ENCODE measurements at regions of chr21 and their contacts with region 1.

Region 1: GRCh38 chr21:44677881-44678280 is 4.1 kb downstream of the KRTAP12-1 start:
- DNase-seq: no peak
- H3K4me3 ChIP-seq: no peak overlapping the region
- H3K27ac ChIP-seq: no peak overlapping the region
- H3K4me1 ChIP-seq: no peaks in the 10 kb centered on the region
- H3K27me3 ChIP-seq: peaks cover 4% of the 10 kb centered on the region
- CTCF ChIP-seq: no peak

Region 2: GRCh38 chr21:44199465-44199864 is 478.4 kb before region 1 on chr21:
- CTCF ChIA-PET with region 1: no interaction called
- dilution Hi-C with region 1: no loop called
- in situ Hi-C with region 1: no loop called
- intact Hi-C with region 1: no loop called
- DNase-seq: no peak
- H3K4me3 ChIP-seq: no peak overlapping the region
- H3K27ac ChIP-seq: no peak overlapping the region
- H3K4me1 ChIP-seq: no peaks in the 10 kb centered on the region
- H3K27me3 ChIP-seq: no peaks in the 10 kb centered on the region
- CTCF ChIP-seq: no peak

Region 3: GRCh38 chr21:44547656-44548331 is 130.1 kb before region 1 on chr21:
- CTCF ChIA-PET with region 1: no interaction called
- dilution Hi-C with region 1: no loop called
- in situ Hi-C with region 1: no loop called
- intact Hi-C with region 1: no loop called
- DNase-seq: no peak
- H3K4me3 ChIP-seq: no peak overlapping the region
- H3K27ac ChIP-seq: no peak overlapping the region
- H3K4me1 ChIP-seq: peaks cover 16% of the 10 kb centered on the region
- H3K27me3 ChIP-seq: no peaks in the 10 kb centered on the region
- CTCF ChIP-seq: no peak

Region 4: GRCh38 chr21:44596068-44596725 is 81.7 kb before region 1 on chr21:
- CTCF ChIA-PET with region 1: no interaction called
- dilution Hi-C with region 1: loop called (anchors 5 kb)
- in situ Hi-C with region 1: no loop called
- intact Hi-C with region 1: no loop called
- DNase-seq: peak; percentile 62
- H3K4me3 ChIP-seq: no peak overlapping the region
- H3K27ac ChIP-seq: no peak overlapping the region
- H3K4me1 ChIP-seq: peaks cover 21% of the 10 kb centered on the region
- H3K27me3 ChIP-seq: no peaks in the 10 kb centered on the region
- CTCF ChIP-seq: no peak

Region 5: GRCh38 chr21:44626262-44626661 is 51.6 kb before region 1 on chr21:
- CTCF ChIA-PET with region 1: no interaction called
- dilution Hi-C with region 1: loop called (anchors 5 kb)
- in situ Hi-C with region 1: no loop called
- intact Hi-C with region 1: no loop called
- DNase-seq: no peak
- H3K4me3 ChIP-seq: no peak overlapping the region
- H3K27ac ChIP-seq: no peak overlapping the region
- H3K4me1 ChIP-seq: no peaks in the 10 kb centered on the region
- H3K27me3 ChIP-seq: no peaks in the 10 kb centered on the region
- CTCF ChIP-seq: no peak

Region 6: GRCh38 chr21:44709426-44710293 is 31.8 kb after region 1 on chr21:
- CTCF ChIA-PET with region 1: no interaction called
- dilution Hi-C with region 1: loop called (anchors 5 kb)
- in situ Hi-C with region 1: no loop called
- intact Hi-C with region 1: no loop called
- DNase-seq: peak; percentile 82
- H3K4me3 ChIP-seq: peak overlapping the region; percentile 10 to 39 (median 32)
- H3K27ac ChIP-seq: no peak overlapping the region
- H3K4me1 ChIP-seq: peaks cover 27% of the 10 kb centered on the region
- H3K27me3 ChIP-seq: peaks cover 16% of the 10 kb centered on the region
- CTCF ChIP-seq: no peak

Measured in mammary epithelial cell (primary cell).